Activated T-helper 1 cell treated with anti-CD3 and anti-CD28 coated beads, Interleukin-12 subunit alpha, Interleukin-12 subunit beta, Interleukin-2, Interleukin-4 antibody, amounts not matched to agents 30 ng/mL and 10 ng/mL and 1 ng/mL, durations not matched to agents 14 hours and 24 hours and 36 hours (primary cell): ENCODE measurements at regions of chr21 and their contacts with region 1.

Region 1: DNA sequence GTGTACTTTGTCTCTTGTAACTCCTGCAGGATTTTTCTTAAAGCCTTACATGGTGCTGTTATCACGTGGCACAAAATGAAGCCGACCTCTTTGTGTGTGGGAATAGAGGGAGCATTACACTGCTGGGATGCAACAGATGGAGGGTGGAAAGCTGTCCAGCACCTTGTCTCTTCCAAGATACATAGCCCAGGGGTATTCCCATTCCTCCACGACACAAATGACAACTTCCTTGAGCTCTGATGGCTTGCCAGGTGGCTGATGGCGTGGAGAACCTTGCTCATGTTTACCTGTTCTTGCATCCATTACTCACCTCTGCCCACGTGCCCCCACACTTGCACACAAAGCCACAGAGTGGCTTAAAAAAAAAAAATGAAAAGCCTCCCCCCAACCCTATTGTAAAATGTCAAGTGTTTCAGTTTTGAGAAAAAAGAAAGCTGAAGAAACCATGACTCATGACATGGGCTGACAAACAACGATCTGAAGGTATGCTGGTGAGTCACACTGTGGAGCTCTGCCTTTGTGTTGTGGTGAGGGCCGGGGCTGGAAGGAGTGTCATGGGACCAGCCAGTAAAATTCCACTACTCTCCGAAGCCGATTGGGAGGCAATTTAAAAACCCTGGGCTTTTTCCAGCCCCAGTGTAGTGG is 32.0 kb upstream of the ATP5PO start:
- DNase-seq: peak; percentile 85
- H3K4me3 Mint-ChIP-seq: peak overlapping the region; percentile 65
- H3K27ac Mint-ChIP-seq: peak overlapping the region; percentile 97
- H3K4me1 Mint-ChIP-seq: peaks cover 77% of the 10 kb centered on the region
- H3K27me3 Mint-ChIP-seq: peaks cover 4% of the 10 kb centered on the region

Region 2: GRCh38 chr21:33767236-33767635 is 180.3 kb before region 1 on chr21:
- intact Hi-C with region 1: no loop called
- DNase-seq: no peak
- H3K4me3 Mint-ChIP-seq: no peak overlapping the region
- H3K27ac Mint-ChIP-seq: no peak overlapping the region
- H3K4me1 Mint-ChIP-seq: no peaks in the 10 kb centered on the region
- H3K27me3 Mint-ChIP-seq: no peaks in the 10 kb centered on the region

Region 3: GRCh38 chr21:33817663-33818451 is 129.7 kb before region 1 on chr21:
- intact Hi-C with region 1: no loop called
- DNase-seq: no peak
- H3K4me3 Mint-ChIP-seq: no peak overlapping the region
- H3K27ac Mint-ChIP-seq: no peak overlapping the region
- H3K4me1 Mint-ChIP-seq: no peaks in the 10 kb centered on the region
- H3K27me3 Mint-ChIP-seq: no peaks in the 10 kb centered on the region

Region 4: GRCh38 chr21:33931799-33932390 is 15.7 kb before region 1 on chr21:
- intact Hi-C with region 1: loop called (anchors 1 kb)
- DNase-seq: no peak
- H3K4me3 Mint-ChIP-seq: peak overlapping the region; percentile 97
- H3K27ac Mint-ChIP-seq: peak overlapping the region; percentile 94
- H3K4me1 Mint-ChIP-seq: peaks cover 46% of the 10 kb centered on the region
- H3K27me3 Mint-ChIP-seq: no peaks in the 10 kb centered on the region

Region 5: GRCh38 chr21:33993286-33994231 is 46.0 kb after region 1 on chr21:
- intact Hi-C with region 1: no loop called
- DNase-seq: no peak
- H3K4me3 Mint-ChIP-seq: no peak overlapping the region
- H3K27ac Mint-ChIP-seq: peak overlapping the region; percentile 10
- H3K4me1 Mint-ChIP-seq: peaks cover 23% of the 10 kb centered on the region
- H3K27me3 Mint-ChIP-seq: no peaks in the 10 kb centered on the region

Region 6: GRCh38 chr21:34009193-34009592 is 61.6 kb after region 1 on chr21:
- intact Hi-C with region 1: no loop called
- DNase-seq: no peak
- H3K4me3 Mint-ChIP-seq: no peak overlapping the region
- H3K27ac Mint-ChIP-seq: peak overlapping the region; percentile 69
- H3K4me1 Mint-ChIP-seq: peaks cover 22% of the 10 kb centered on the region
- H3K27me3 Mint-ChIP-seq: no peaks in the 10 kb centered on the region

Region 7: GRCh38 chr21:34020005-34020847 is 72.7 kb after region 1 on chr21:
- intact Hi-C with region 1: loop called (anchors 1 kb)
- DNase-seq: no peak
- H3K4me3 Mint-ChIP-seq: peak overlapping the region; percentile 38
- H3K27ac Mint-ChIP-seq: peak overlapping the region; percentile 59
- H3K4me1 Mint-ChIP-seq: peaks cover 26% of the 10 kb centered on the region
- H3K27me3 Mint-ChIP-seq: no peaks in the 10 kb centered on the region

Region 8: GRCh38 chr21:34190576-34191321 is 243.2 kb after region 1 on chr21:
- intact Hi-C with region 1: loop called (anchors 1 kb)
- DNase-seq: no peak
- H3K4me3 Mint-ChIP-seq: peak overlapping the region; percentile 66
- H3K27ac Mint-ChIP-seq: peak overlapping the region; percentile 92
- H3K4me1 Mint-ChIP-seq: peaks cover 53% of the 10 kb centered on the region
- H3K27me3 Mint-ChIP-seq: no peaks in the 10 kb centered on the region